Left ventricle myocardium superior (tissue), 1 donor: ENCODE measurements at regions of chr1 and their contacts with region 1.

Region 1: GRCh38 chr1:109399326-109399957 is 1.7 kb upstream of the SORT1 start:
- DNase-seq: no peak
- ATAC-seq: peak; percentile 7

Region 2: GRCh38 chr1:109277434-109278204 is 121.8 kb before region 1 on chr1:
- intact Hi-C with region 1: loop called (anchors 1 kb)
- DNase-seq: peak; percentile 87
- ATAC-seq: peak; percentile 81